Colonic mucosa (tissue), 4 donors: ENCODE measurements at regions of chr1 and their contacts with region 1.

Region 1: DNA sequence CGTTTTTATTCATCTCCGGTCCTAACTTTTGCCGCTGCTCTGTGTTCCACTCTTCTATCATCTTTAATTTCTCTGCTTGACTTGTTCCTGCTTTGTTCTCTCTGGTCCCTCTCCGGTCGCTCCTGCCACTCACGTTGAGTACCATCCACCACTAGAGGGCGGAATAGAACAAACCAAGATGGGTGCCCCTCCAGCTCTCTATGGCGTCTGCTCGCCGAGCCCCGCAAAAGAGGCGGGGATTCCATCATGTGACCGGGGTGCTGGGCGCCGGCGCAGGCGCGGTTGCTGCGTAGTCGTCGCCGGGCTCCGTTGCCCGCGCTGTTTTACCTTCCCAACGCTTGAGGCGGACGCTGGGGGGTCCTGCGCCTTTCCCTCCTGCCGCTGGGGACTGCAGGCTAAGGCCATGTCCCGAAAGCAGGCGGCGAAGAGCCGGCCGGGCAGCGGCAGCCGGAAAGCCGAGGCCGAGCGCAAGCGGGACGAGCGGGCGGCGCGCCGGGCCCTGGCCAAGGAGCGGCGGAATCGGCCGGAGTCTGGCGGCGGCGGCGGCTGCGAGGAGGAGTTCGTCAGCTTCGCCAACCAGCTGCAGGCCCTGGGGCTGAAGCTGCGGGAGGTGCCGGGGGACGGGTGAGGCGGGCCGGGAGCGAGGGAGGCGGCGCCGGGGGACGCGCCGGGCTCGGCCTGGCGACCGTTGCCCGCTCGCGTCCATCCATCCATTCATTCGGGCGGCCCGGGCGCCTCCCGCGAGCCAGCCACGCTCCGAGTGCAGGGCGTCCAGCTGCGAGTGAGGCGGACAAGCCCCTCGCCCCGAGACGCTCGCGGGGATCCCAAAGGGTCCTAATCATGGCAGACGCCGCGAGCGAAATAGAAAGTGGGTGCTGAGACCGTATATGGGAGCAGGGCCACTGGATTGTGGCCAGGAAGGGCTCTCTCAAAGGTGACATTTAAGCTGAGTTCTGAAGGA is at the start of gene OTUD3:
- DNase-seq: peak; percentile 98
- H3K4me3 ChIP-seq: peak within 1 kb of the TSS; percentile 80
- H3K27ac ChIP-seq: peak within 1 kb of the TSS; percentile 86
- H3K4me1 ChIP-seq: no peaks in the 10 kb centered on the region
- H3K27me3 ChIP-seq: no peaks in the 10 kb centered on the region
- CTCF ChIP-seq: peak; percentile 89
- total RNA-seq, gene OTUD3: 9.6 to 15.6 TPM

Region 2: GRCh38 chr1:19715334-19716203 is 166.8 kb before region 1 on chr1:
- intact Hi-C with region 1: loop called (anchors 5 kb)
- DNase-seq: peak; percentile 95
- H3K4me3 ChIP-seq: no peak overlapping the region
- H3K27ac ChIP-seq: no peak overlapping the region
- H3K4me1 ChIP-seq: no peaks in the 10 kb centered on the region
- H3K27me3 ChIP-seq: no peaks in the 10 kb centered on the region
- CTCF ChIP-seq: peak; percentile 83

Region 3: DNA sequence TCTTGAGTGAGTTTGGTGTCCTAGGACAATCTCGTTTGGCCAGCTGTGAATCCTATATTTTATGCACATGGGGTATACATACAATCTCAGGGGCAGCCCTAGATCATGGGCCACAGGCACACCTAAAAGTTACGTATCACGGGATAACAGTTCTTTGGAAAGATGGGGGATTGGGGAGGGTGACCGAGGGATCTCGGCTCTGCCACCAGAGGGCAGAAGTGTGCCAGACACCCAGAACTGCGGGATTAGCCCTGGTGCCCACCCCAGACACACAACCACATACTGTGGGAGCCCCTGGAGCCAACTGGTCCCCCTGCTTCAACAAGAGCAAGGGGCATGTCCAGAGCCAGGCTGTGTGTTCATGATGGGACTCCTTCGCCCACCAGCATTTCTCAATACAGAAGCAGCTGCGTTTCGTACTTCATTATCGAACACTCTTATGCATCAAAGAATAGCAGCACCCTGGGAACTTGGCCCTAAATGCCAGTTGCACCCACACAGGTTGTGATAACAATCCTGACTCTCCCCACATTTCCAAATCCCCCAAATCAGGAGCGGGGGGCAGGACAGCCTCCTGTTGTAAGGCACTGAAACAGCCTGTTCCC is 120.1 kb before region 1 on chr1:
- intact Hi-C with region 1: loop called (anchors 5 kb)
- DNase-seq: peak; percentile 40
- H3K4me3 ChIP-seq: no peak overlapping the region
- H3K27ac ChIP-seq: no peak overlapping the region
- H3K4me1 ChIP-seq: no peaks in the 10 kb centered on the region
- H3K27me3 ChIP-seq: no peaks in the 10 kb centered on the region
- CTCF ChIP-seq: peak; percentile 73